PC-9 (cell line): ENCODE measurements at regions of chr3 and their contacts with region 1.

Region 1: DNA sequence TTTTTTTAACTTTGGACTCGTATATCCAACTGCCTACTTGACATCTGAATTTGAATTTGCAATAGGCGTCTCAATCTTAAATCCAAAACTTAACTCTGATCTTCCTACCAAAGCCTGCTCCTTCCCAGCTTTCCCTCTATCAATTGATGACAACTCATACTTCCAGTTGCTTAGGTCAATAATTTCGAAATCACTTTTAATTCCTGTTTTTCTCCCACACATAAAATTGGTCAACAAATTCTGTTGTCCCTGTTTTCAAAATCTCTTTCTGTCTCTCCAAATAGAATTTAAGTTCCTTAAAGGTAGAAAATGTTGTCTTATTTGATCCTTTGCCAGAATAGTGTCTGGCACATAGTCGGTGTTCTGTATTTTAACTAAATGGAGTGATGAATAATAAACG is 332.4 kb downstream of the SATB1 start:
- DNase-seq: no peak
- H3K4me3 ChIP-seq: no peak overlapping the region
- H3K27ac ChIP-seq: no peak overlapping the region
- H3K4me1 ChIP-seq: 0 out of 2 replicates have a peak, but pooled peaks cover 2% of the 10 kb centered on the region
- H3K27me3 ChIP-seq: no peaks in the 10 kb centered on the region
- CTCF ChIP-seq: no peak

Region 2: DNA sequence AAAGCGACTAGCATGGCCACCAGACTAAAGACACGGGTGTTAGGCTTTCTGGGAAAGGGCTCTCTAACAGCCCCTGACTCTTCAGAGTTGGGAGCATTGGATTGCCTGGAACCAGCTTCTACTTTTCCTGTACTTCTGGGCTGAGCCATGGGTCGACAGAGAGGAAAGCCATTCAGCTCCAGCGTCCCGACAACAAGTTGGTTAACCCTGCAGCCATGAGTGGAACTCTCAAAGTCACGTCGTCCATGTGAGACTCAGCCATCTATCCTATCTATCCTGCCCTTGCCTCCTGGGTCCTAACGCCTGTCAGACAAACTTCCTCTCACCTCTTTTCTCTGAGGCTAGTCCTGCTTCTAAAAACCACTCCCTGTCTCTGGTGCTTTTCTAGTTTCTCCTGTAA is 317.7 kb before region 1 on chr3:
- CTCF ChIA-PET with region 1: no interaction called
- POLR2A ChIA-PET with region 1: no interaction called
- intact Hi-C with region 1: no loop called
- DNase-seq: no peak
- H3K4me3 ChIP-seq: no peak overlapping the region
- H3K27ac ChIP-seq: no peak overlapping the region
- H3K4me1 ChIP-seq: peaks cover 8% of the 10 kb centered on the region
- H3K27me3 ChIP-seq: no peaks in the 10 kb centered on the region
- CTCF ChIP-seq: no peak

Region 3: GRCh38 chr3:18071833-18072232 is 20.9 kb before region 1 on chr3:
- CTCF ChIA-PET with region 1: no interaction called
- POLR2A ChIA-PET with region 1: no interaction called
- intact Hi-C with region 1: loop called (anchors 1 kb)
- DNase-seq: no peak
- H3K4me3 ChIP-seq: no peak overlapping the region
- H3K27ac ChIP-seq: no peak overlapping the region
- H3K4me1 ChIP-seq: peaks cover 12% of the 10 kb centered on the region
- H3K27me3 ChIP-seq: no peaks in the 10 kb centered on the region
- CTCF ChIP-seq: no peak